RWPE1 (cell line): ENCODE measurements at regions of chr14 and their contacts with region 1.

Region 1: DNA sequence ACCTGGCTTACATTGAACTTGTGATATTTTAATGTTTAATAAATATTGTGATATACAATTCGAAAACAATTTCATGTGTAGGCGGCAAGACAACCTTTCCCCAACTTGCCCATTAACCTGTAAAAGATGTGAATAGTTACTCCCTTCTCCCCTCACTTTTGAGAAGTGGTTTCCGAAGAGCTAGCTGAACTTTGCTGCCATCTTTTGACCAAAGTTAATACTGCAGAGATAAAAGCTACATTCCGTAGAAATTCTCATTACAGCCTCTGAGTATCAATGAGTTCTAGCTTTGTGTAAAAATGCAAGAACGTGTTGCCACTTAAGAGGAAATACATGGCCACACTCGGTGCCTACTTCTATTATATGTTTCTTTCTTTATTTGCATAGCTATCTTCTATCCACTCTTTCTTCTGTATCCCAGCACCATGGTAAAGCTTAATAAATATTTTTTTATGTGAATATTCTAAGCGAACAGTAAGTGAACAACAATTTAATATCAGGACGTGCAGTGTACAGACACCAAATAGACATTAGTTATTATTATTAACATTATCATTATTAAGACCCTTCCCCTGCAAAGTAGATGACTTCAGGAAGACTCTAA is 105.1 kb upstream of the TMEM260 start:
- DNase-seq: peak; percentile 34
- H3K27ac ChIP-seq: no peak overlapping the region
- CTCF ChIP-seq: peak; percentile 88

Region 2: GRCh38 chr14:55705651-55706364 is 768.7 kb before region 1 on chr14:
- CTCF ChIA-PET with region 1: interaction called, 10 read pairs
- POLR2A ChIA-PET with region 1: no interaction called
- DNase-seq: peak; percentile 45
- H3K27ac ChIP-seq: peak overlapping the region; percentile 59
- CTCF ChIP-seq: no peak

Region 3: DNA sequence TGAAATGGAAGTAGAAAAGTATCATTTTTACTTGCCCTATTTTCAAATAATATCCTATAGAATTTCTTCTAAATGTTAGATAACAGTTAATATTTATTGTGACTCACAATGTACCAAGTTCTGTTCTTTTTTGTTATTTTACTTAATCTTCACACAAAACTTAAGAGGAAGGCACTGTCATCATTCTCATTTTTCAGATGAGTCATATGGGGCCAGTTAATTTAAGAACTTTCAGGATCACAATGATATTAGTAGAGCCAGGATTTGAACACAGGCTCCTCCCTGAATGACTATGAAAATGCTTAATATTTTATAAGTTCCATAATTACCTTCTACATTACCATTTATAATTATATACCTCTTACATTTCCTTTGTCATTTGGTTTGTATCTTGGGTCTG is 94.7 kb after region 1 on chr14:
- CTCF ChIA-PET with region 1: no interaction called
- POLR2A ChIA-PET with region 1: no interaction called
- DNase-seq: no peak
- H3K27ac ChIP-seq: no peak overlapping the region
- CTCF ChIP-seq: no peak

Region 4: GRCh38 chr14:56808383-56809269 is 334.1 kb after region 1 on chr14:
- CTCF ChIA-PET with region 1: no interaction called
- POLR2A ChIA-PET with region 1: no interaction called
- DNase-seq: no peak
- H3K27ac ChIP-seq: no peak overlapping the region
- CTCF ChIP-seq: no peak